Endothelial cell of umbilical vein (primary cell): ENCODE measurements at regions of chr12 and their contacts with region 1.

Region 1: DNA sequence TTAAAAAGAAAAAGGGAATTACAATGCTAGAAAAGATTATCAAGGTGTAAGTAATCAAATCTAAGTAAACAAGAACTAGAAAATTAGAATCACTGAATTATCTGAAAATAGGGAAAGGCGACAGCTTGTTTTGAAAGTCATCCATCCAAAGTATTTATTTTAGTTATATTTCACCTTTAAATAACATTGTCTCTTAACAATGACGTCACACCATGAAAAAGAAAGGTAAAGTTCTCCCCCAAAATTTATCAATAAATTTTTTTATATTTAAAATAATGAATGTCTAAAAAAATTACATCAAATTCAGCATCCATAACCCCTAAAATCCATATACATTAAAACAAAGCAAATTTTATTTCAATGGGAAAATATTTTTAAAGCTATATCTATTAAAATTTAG is 223.2 kb downstream of the RERGL start:
- DNase-seq: no peak
- H3K4me3 ChIP-seq: no peak overlapping the region
- H3K27ac ChIP-seq: no peak overlapping the region
- H3K4me1 ChIP-seq: no peaks in the 10 kb centered on the region
- H3K27me3 ChIP-seq: no peaks in the 10 kb centered on the region
- CTCF ChIP-seq: no peak
- POLR2A ChIP-seq: no peak

Region 2: GRCh38 chr12:17778242-17778641 is 88.6 kb before region 1 on chr12:
- CTCF ChIA-PET with region 1: no interaction called
- POLR2A ChIA-PET with region 1: no interaction called
- dilution Hi-C with region 1: no loop called
- intact Hi-C with region 1: loop called (anchors 2 kb)
- DNase-seq: no peak
- H3K4me3 ChIP-seq: no peak overlapping the region
- H3K27ac ChIP-seq: no peak overlapping the region
- H3K4me1 ChIP-seq: no peaks in the 10 kb centered on the region
- H3K27me3 ChIP-seq: no peaks in the 10 kb centered on the region
- CTCF ChIP-seq: no peak
- POLR2A ChIP-seq: no peak